ENCODE measurements at regions of chr18 and their contacts with region 1.

Region 1: DNA sequence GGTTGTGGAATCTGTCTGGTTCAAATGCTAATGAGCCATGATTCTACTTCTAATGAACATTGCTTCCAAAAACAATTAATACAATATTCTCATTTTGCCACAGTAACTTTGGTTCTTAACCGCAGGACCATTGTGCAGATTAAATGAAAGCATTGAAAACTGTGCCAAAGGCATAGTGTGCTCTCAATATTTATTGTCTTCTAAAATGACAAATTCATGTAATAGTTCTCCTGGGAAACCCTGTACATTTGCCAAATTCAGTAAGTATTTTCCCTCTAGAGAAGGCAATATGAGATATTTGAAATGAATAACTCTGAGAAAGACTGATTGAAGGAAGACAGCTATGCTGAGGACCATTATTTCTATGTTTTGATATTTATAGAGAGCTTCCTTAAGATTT is 246.3 kb downstream of the CCDC102B start:
- DNase-seq: no peak
- ATAC-seq: no peak
- H3K4me3 Mint-ChIP-seq: no peak overlapping the region
- H3K27ac Mint-ChIP-seq: no peak overlapping the region
- H3K4me1 Mint-ChIP-seq: no peaks in the 10 kb centered on the region
- H3K27me3 Mint-ChIP-seq: peaks cover 2% of the 10 kb centered on the region

Region 2: DNA sequence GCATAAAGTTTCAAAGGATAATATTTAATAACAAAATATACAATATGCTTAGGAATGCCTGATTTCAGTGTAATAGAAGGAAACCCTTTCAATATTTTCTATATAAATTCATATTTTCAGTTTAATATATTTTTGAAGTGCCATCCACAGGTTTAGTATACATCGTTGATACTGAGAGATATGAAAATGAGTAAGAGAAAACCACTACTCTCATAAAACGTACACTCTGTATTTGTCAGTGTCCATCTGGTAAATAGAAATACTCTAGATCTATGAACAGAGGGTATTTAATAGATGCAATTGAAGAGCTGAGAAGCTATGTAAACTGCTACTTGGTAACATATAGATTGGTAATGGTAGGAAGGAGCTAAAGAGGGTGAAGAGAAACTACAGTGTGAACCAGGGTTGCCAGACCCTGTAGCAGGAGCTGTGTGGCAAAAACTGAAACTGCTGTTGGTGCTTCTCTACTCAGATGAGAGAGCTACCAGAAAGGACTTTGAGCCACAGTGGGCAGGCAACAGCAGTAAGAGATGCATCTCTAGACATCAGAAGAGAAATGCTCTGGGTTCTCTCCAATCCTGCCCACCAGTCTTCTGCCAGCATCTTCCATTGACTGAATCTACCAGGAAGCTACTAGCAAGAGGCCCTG is 58.9 kb before region 1 on chr18:
- CTCF ChIA-PET with region 1: no interaction called
- POLR2A ChIA-PET with region 1: no interaction called
- intact Hi-C with region 1: loop called in 1 of 2 experiments (anchors 10 kb)
- DNase-seq: no peak
- ATAC-seq: no peak
- H3K4me3 Mint-ChIP-seq: no peak overlapping the region
- H3K27ac Mint-ChIP-seq: no peak overlapping the region
- H3K4me1 Mint-ChIP-seq: no peaks in the 10 kb centered on the region
- H3K27me3 Mint-ChIP-seq: no peaks in the 10 kb centered on the region

Region 3: DNA sequence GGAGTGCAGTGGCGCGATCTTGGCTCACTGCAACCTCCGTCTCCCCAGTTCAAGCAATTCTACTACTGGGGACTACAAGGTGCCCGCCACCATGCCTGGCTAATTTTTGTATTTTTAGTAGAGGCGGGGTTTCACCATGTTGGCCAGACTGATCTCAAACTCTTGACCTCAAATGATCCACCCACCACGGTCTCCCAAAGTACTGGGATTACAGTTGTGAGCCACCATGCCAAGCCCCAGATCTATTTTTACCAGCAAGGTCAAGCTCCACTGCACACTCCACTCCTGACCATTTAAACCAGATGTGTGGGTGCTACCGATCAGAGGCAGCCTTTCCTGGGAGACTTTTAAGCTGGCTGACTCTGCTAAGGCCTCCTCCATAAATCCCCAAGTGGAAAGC is 970.9 kb after region 1 on chr18:
- CTCF ChIA-PET with region 1: no interaction called
- POLR2A ChIA-PET with region 1: no interaction called
- intact Hi-C with region 1: no loop called
- DNase-seq: no peak
- ATAC-seq: no peak
- H3K4me3 Mint-ChIP-seq: no peak overlapping the region
- H3K27ac Mint-ChIP-seq: no peak overlapping the region
- H3K4me1 Mint-ChIP-seq: no peaks in the 10 kb centered on the region
- H3K27me3 Mint-ChIP-seq: no peaks in the 10 kb centered on the region

Measured in activated CD4-positive, alpha-beta T cell treated with anti-CD3 and anti-CD28 coated beads for 36 hours (primary cell).